CD8-positive, alpha-beta memory T cell (primary cell): ENCODE measurements at regions of chr6 and their contacts with region 1.

Region 1: DNA sequence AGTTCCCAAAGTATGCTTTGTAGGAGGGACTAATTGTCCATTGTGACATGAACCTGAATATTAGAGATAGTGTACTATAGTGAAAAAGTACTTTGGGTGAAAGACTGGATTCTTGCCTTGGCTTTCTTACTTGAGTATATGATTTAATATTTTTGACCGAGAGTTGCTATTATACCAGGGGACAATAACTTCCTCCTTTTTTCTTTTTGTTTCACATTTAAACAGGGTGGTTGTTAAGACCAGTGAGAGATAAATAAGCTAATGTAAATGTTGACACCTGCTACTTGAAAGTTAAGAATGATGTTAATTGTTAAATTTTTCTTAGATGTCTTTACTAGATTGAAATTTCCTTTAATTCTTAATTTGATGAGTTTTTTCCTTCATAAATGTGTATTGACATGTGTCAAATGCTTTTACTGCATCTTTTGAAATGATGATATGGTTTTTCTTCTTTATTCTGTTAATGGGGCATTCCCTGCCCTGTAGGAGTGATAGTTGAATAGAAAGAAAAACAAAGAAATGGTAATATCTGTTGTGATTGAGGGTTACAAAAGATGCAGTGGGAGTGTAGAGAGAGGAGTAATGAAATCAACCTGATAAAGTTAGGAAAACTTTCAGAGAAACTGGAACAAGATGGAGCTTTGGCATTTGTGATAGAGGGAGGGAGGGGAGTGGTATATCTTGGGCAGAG is 48.4 kb downstream of the ZFAND3 start:
- DNase-seq: no peak
- H3K4me3 ChIP-seq: no peak overlapping the region
- H3K4me3 Mint-ChIP-seq: peak overlapping the region in 5 of 7 donors; percentile 8 to 55 (median 44)
- H3K27ac ChIP-seq: no peak overlapping the region
- H3K27ac Mint-ChIP-seq: peak overlapping the region in 5 of 8 donors; percentile 18 to 86 (median 49)
- H3K4me1 ChIP-seq: peaks cover 28% of the 10 kb centered on the region
- H3K4me1 Mint-ChIP-seq: peaks cover 61 to 81% (median 73%) of the 10 kb centered on the region in 3 donors
- H3K27me3 ChIP-seq: no peaks in the 10 kb centered on the region
- H3K27me3 Mint-ChIP-seq: no peaks in the 10 kb centered on the region

Region 2: DNA sequence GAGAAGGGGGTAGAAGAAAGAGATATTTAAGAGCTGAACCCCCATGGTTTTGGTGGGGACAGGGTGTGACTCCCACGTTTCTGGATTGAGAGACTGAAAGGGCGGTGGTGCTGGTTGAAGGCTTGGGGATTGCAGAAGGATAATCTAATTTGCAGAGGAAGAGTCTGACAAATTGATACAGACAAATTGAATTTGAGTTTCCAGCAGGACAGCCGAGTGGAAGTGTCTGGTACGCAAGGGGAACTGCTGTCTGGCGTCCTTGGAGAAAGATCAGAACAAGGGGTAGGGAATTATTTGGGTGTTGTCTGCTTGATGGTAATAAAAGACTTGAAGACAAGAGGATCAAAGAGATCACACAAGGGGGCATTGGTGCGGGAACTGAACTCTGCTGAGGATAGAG is 129.7 kb before region 1 on chr6:
- CTCF ChIA-PET with region 1: no interaction called
- POLR2A ChIA-PET with region 1: no interaction called
- DNase-seq: no peak
- H3K4me3 ChIP-seq: no peak overlapping the region
- H3K4me3 Mint-ChIP-seq: no peak overlapping the region
- H3K27ac ChIP-seq: no peak overlapping the region
- H3K27ac Mint-ChIP-seq: no peak overlapping the region
- H3K4me1 ChIP-seq: no peaks in the 10 kb centered on the region
- H3K4me1 Mint-ChIP-seq: no peaks in the 10 kb centered on the region
- H3K27me3 ChIP-seq: no peaks in the 10 kb centered on the region
- H3K27me3 Mint-ChIP-seq: peaks cover 8 to 14% of the 10 kb centered on the region in 2 donors

Region 3: GRCh38 chr6:37897321-37897720 is 29.4 kb after region 1 on chr6:
- CTCF ChIA-PET with region 1: no interaction called
- POLR2A ChIA-PET with region 1: interaction called, 10 read pairs
- DNase-seq: no peak
- H3K4me3 ChIP-seq: no peak overlapping the region
- H3K4me3 Mint-ChIP-seq: no peak overlapping the region
- H3K27ac ChIP-seq: no peak overlapping the region
- H3K27ac Mint-ChIP-seq: no peak overlapping the region
- H3K4me1 ChIP-seq: peaks cover 12% of the 10 kb centered on the region
- H3K4me1 Mint-ChIP-seq: peaks cover 43 to 75% (median 65%) of the 10 kb centered on the region in 3 donors
- H3K27me3 ChIP-seq: no peaks in the 10 kb centered on the region
- H3K27me3 Mint-ChIP-seq: no peaks in the 10 kb centered on the region

Region 4: DNA sequence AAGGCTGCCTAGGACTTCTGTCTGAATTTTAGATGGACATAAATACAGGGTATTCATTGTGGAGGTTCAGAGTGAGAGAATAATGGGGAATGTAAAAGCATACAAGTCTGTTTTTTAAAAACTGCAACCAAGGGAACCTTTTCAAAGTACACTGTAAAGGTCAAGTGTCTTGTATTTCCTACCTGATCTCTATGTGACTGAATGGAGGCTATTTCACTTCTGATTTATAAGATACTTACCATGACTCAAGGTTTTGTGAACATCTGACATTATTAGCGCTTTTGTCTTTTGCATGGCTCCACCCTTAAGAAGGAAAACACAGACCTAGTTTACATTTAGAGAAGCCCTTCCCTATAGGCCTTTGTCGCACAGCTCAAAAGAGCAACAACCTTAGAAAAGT is 78.2 kb after region 1 on chr6:
- CTCF ChIA-PET with region 1: no interaction called
- POLR2A ChIA-PET with region 1: no interaction called
- DNase-seq: no peak
- H3K4me3 ChIP-seq: no peak overlapping the region
- H3K4me3 Mint-ChIP-seq: no peak overlapping the region
- H3K27ac ChIP-seq: no peak overlapping the region
- H3K27ac Mint-ChIP-seq: no peak overlapping the region
- H3K4me1 ChIP-seq: no peaks in the 10 kb centered on the region
- H3K4me1 Mint-ChIP-seq: peaks cover 56 to 67% (median 67%) of the 10 kb centered on the region in 3 donors
- H3K27me3 ChIP-seq: no peaks in the 10 kb centered on the region
- H3K27me3 Mint-ChIP-seq: no peaks in the 10 kb centered on the region